Left ventricle myocardium inferior (tissue), 1 donor: ENCODE measurements at regions of chr17 and their contacts with region 1.

Region 1: DNA sequence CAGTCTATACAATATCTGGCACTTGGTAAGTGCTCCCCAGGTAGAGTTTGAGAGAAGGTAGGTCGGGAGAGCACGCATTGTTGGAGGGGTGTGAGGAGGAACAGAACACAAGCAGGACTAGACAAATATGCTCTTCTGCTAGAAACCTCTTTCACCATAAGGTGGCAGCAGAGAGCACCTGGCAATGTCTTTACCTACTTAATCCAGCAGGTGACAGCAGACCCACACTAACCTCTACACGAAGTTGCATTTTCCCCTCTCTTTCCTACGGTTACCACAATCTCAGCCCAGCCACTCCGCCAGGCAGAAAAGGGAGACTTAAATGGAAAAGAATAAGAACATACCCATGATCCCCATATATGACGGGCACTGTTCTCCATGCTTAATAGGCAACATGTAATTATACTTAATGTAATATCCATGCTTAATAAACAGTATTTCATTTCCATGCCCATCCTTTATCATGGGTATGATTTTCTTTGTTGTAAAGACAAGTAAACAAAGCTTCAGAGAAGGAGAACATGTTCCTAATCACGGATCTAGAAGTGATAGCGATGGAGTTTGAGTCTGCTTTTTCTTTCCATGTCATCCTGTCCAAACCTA is 55.1 kb upstream of the CCL2 start:
- DNase-seq: peak; percentile 44
- H3K4me3 ChIP-seq: no peak overlapping the region
- H3K27ac ChIP-seq: peak overlapping the region; percentile 36
- H3K4me1 ChIP-seq: peaks cover 9% of the 10 kb centered on the region
- H3K27me3 ChIP-seq: peaks cover 33% of the 10 kb centered on the region
- CTCF ChIP-seq: peak; percentile 100

Region 2: DNA sequence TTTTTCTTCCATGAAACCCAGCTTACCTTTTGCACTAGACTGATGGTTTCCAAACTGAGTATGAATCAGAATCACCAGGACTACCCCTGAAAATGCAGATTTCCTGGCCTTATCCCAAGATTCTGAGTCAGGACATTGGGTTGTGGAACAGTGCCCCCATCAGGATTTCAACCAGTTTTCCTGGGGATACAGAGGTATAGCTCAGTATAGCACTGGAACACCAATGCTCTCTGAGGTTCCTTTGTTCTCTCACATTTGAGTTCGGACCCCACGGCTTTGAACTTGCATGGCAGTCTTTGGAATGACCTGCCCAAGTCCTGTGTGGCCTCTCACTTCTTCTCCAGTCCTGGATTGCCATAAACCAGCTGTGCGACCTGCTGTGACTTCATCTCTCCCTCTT is 106.4 kb after region 1 on chr17:
- intact Hi-C with region 1: loop called (anchors 5 kb)
- DNase-seq: no peak
- H3K4me3 ChIP-seq: no peak overlapping the region
- H3K27ac ChIP-seq: peak overlapping the region; percentile 68
- H3K4me1 ChIP-seq: peaks cover 47% of the 10 kb centered on the region
- H3K27me3 ChIP-seq: no peaks in the 10 kb centered on the region
- CTCF ChIP-seq: peak; percentile 70

Region 3: DNA sequence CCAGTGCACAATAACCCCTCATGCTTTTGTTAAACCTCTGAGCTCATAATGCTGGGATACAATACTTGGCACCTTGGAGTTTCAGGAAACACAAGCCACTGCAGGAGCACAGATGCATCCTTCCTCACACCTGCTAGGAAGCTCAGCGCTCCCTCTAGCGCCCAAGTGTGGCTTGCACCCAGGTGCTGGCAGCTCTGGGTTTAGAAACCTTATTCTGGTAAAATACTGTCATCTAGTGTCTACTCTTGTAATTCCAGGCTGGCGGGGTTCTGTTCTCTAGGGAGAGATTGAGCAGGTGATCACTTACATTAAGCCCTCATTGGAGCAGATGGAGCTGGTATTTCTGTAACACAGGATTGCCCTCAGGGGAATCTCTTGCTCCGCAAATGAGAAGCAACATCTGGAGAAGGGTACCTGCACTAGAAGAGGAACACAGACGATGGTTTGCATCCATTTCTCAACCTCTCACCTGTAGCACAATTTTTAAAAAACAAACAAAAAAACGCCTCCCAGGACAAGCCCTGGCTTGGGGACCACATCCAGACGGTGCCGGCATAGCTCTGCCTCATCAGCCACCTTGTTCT is 161.5 kb after region 1 on chr17:
- intact Hi-C with region 1: loop called (anchors 2 kb)
- DNase-seq: peak; percentile 89
- H3K4me3 ChIP-seq: no peak overlapping the region
- H3K27ac ChIP-seq: no peak overlapping the region
- H3K4me1 ChIP-seq: peaks cover 8% of the 10 kb centered on the region
- H3K27me3 ChIP-seq: peaks cover 36% of the 10 kb centered on the region
- CTCF ChIP-seq: peak; percentile 100